Activated CD4-positive, alpha-beta T cell treated with anti-CD3 and anti-CD28 coated beads, Interleukin-2, amount 10 ng/mL, durations not matched to agents 24 days and 14 days (primary cell): ENCODE measurements at regions of chr2 and their contacts with region 1.

Region 1: DNA sequence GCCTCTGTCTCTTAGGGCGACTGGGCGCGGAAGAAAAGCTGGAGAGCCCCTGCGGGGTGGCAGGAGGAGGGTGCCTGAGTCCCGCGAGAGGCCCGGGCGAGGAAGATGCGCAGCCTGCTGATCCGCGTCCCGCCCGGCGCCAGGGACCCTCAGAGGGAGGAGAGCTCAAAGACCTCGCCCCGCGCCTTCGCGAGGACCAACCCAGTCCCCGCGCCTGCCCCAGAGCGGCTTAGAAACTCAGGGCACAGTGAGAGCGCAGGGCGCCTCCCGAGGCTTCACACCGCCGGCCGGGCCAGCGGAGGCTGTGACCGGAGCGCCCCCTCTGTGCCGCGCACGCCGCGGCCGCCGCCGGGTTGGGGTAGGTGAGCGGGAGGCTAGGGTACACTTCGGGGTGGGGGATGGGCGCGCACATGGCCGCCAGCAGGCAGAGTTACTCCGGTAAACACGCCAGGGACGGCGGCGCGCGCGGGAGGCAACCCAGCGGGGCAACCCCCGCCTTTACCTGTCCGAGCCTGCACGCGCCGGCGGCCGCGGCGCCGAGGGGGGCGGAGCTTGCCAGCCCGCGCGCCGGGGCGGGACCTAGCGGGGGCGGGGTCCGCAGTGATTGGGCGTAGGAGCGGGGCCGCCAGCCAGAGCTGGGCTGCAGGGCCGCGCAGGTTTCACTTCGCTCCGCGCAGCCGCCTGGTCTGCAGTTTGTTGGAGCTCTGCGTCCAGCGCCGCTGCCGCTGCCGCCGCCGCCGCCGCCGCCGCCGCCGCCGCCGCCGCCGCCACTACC is at the start of gene BCL2L11:
- DNase-seq: peak; percentile 98
- H3K4me3 Mint-ChIP-seq: peak within 1 kb of the TSS; percentile 96
- H3K27ac Mint-ChIP-seq: peak within 1 kb of the TSS; percentile 93
- H3K4me1 Mint-ChIP-seq: peaks cover 44% of the 10 kb centered on the region
- H3K27me3 Mint-ChIP-seq: peaks cover 20% of the 10 kb centered on the region
- total RNA-seq, gene BCL2L11: 193 and 219 TPM in 2 replicates

Region 2: GRCh38 chr2:110804915-110805314 is 315.5 kb before region 1 on chr2:
- intact Hi-C with region 1: loop called (anchors 2 kb)
- DNase-seq: peak; percentile 82
- H3K4me3 Mint-ChIP-seq: peak overlapping the region; percentile 12
- H3K27ac Mint-ChIP-seq: peak overlapping the region; percentile 18
- H3K4me1 Mint-ChIP-seq: peaks cover 17% of the 10 kb centered on the region
- H3K27me3 Mint-ChIP-seq: peaks cover 55% of the 10 kb centered on the region

Region 3: DNA sequence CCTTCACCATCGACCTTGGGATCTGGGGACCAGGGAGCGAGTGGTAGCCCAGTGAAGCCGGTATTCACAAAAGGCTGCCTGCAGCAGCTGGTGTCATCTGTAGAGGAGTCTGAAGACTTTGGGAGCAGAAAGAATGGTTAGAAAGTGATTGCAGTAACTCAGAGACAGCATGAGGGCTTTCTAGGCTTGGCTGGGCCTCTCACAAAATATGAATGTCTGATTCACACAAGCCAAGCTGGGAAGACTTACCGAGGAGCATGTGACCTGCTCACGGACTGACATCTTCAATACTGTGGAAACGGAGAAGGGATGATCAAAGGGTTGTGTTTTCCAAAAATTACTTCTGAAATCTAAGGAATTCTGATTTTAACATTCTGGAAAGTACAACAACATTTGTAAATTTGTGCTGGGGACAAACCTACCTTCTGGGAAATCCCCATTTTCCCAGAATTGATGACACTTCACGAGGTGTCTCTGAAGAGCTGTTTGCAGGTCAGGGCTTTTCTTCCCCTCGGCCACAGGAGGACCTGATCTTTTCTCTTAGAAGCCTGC is 276.4 kb before region 1 on chr2:
- intact Hi-C with region 1: loop called (anchors 1 kb)
- DNase-seq: no peak
- H3K4me3 Mint-ChIP-seq: peak overlapping the region; percentile 4
- H3K27ac Mint-ChIP-seq: peak overlapping the region; percentile 81
- H3K4me1 Mint-ChIP-seq: peaks cover 52% of the 10 kb centered on the region
- H3K27me3 Mint-ChIP-seq: peaks cover 21% of the 10 kb centered on the region

Region 4: DNA sequence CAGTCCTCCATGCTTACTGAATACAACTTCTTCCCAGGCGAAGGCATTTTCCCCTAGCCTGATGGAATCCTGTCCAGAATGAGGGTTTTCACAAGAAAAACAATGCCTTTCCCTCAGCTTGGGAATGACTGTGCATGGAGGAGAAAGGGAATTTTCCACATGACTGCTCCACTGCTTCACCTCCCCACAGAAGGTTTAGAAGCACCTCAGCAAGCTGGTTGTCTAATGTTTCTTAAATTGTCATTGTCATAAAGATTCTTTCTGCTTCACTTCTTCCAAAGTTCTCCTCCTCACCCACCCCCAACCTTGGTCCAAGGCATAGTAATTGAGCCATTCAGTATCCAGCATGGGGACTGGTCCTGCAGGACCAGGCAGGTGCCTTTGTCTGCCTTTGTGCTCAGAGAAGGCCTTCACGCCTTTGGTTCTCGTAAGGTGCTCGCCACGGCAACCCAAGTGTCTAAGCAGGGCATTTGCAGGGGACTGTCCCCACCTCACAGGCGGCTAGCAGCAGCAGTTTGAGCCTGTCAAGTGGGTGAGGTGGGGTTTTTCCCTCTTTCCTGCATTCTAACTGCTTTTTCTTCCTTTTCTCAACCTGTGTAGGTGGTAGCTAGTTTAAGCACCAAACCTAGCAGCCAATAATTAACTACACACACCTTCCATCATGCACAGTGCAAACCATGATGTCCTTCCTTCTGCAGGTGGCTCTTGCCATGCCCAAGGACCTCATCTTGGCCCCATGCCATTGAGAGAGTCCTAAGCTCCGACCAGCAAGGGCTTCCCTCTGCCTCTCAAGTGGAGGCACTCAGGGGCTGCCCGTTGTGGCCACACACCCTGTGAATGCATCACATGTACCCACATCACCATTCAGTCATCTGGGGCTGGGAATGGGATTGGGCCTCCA is 65.4 kb before region 1 on chr2:
- intact Hi-C with region 1: loop called (anchors 1 kb)
- DNase-seq: peak; percentile 61
- H3K4me3 Mint-ChIP-seq: peak overlapping the region; percentile 50
- H3K27ac Mint-ChIP-seq: peak overlapping the region; percentile 71
- H3K4me1 Mint-ChIP-seq: peaks cover 30% of the 10 kb centered on the region
- H3K27me3 Mint-ChIP-seq: peaks cover 41% of the 10 kb centered on the region

Region 5: DNA sequence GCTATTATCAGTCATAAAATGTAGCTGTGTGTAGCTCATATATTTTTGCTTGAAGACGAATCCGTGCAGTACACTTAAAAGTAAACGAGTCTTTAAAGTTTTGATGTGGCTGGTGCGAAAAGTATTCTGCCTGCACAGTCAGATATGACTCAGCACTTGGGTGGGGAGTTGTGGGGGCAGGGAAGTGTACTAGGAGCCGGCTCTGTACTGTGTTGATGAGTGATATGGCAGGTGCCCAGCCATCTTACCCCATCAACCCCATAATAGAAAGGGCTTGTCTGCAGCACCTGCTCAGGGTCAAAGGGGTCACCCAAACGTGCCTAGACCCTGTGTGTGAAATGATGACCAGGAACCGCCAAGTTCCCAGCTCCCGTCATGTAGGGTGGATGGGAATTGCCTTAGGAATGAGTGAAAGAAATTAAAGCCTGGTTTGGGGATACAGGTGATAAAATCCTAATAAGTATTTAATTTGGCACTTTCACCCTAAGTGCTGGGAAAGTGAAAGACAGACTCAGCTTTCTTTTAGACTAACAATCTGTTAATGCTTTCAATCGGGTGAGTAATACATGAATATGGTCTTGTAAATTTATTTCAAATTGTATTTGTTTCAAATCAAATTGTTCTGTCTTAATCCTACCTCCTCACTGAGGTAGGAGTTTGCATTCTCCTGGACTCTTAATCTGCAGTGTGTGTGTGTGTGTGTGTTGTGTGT is 48.2 kb after region 1 on chr2:
- intact Hi-C with region 1: loop called (anchors 5 kb)
- DNase-seq: peak; percentile 87
- H3K4me3 Mint-ChIP-seq: peak overlapping the region; percentile 4
- H3K27ac Mint-ChIP-seq: peak overlapping the region; percentile 70
- H3K4me1 Mint-ChIP-seq: peaks cover 36% of the 10 kb centered on the region
- H3K27me3 Mint-ChIP-seq: peaks cover 17% of the 10 kb centered on the region

Region 6: GRCh38 chr2:111634050-111634794 is 513.8 kb after region 1 on chr2:
- intact Hi-C with region 1: loop called (anchors 2 kb)
- DNase-seq: peak; percentile 80
- H3K4me3 Mint-ChIP-seq: peak overlapping the region; percentile 62
- H3K27ac Mint-ChIP-seq: peak overlapping the region; percentile 88
- H3K4me1 Mint-ChIP-seq: peaks cover 27% of the 10 kb centered on the region
- H3K27me3 Mint-ChIP-seq: peaks cover 11% of the 10 kb centered on the region